CD4-positive, alpha-beta memory T cell (primary cell): ENCODE measurements at regions of chr1 and their contacts with region 1.

Region 1: GRCh38 chr1:111633736-111634247 is 14.2 kb downstream of the RAP1A start:
- DNase-seq: no peak
- H3K4me3 ChIP-seq: peak overlapping the region in 1 of 2 donors; percentile 1
- H3K4me3 Mint-ChIP-seq: peak overlapping the region in 6 of 8 donors; percentile 4 to 70 (median 36)
- H3K27ac ChIP-seq: no peak overlapping the region
- H3K27ac Mint-ChIP-seq: peak overlapping the region in 3 of 7 donors; percentile 11 to 74 (median 67)
- H3K4me1 ChIP-seq: peaks cover 92% of the 10 kb centered on the region
- H3K4me1 Mint-ChIP-seq: peaks cover 60 to 89% (median 79%) of the 10 kb centered on the region in 4 donors
- H3K27me3 ChIP-seq: no peaks in the 10 kb centered on the region
- H3K27me3 Mint-ChIP-seq: no peaks in the 10 kb centered on the region

Region 2: DNA sequence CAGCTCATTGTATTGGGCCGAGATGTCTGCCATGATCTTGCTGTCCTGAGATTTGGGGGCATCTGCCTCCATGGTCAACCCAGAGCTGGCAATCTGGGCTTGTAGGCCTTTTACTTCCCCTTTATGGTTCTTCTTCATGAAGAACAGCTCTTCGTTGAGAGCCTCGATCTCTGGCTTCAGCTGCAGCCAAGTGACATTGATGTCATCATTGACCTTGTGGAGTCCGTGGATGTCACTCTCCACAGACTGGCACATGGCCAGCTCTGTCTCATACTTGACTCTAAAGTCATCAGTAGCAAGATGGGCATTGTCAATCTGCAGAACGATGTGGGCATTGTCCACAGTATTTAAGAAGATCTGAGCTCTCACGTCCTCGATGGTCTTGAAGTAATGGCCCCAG is 15.0 kb after region 1 on chr1:
- CTCF ChIA-PET with region 1: interaction called, 4 read pairs
- POLR2A ChIA-PET with region 1: interaction called, 5 read pairs
- intact Hi-C with region 1: loop called (anchors 1 kb)
- DNase-seq: no peak
- H3K4me3 ChIP-seq: no peak overlapping the region
- H3K4me3 Mint-ChIP-seq: peak overlapping the region in 5 of 8 donors; percentile 36 to 73 (median 56)
- H3K27ac ChIP-seq: peak overlapping the region; percentile 0
- H3K27ac Mint-ChIP-seq: peak overlapping the region; percentile 28 to 84 (median 77)
- H3K4me1 ChIP-seq: peaks cover 85% of the 10 kb centered on the region
- H3K4me1 Mint-ChIP-seq: peaks cover 68 to 92% (median 81%) of the 10 kb centered on the region in 4 donors
- H3K27me3 ChIP-seq: no peaks in the 10 kb centered on the region
- H3K27me3 Mint-ChIP-seq: no peaks in the 10 kb centered on the region

Region 3: GRCh38 chr1:111755331-111756123 is 121.7 kb after region 1 on chr1 and contains the start of gene DDX20:
- CTCF ChIA-PET with region 1: no interaction called
- POLR2A ChIA-PET with region 1: no interaction called
- intact Hi-C with region 1: no loop called
- DNase-seq: peak; percentile 94 to 96 (median 95)
- H3K4me3 ChIP-seq: peak within 1 kb of the TSS; percentile 63 to 92
- H3K4me3 Mint-ChIP-seq: peak within 1 kb of the TSS; percentile 90 to 100 (median 98)
- H3K27ac ChIP-seq: peak within 1 kb of the TSS; percentile 93
- H3K27ac Mint-ChIP-seq: peak within 1 kb of the TSS; percentile 97 to 100 (median 99)
- H3K4me1 ChIP-seq: peaks cover 20% of the 10 kb centered on the region
- H3K4me1 Mint-ChIP-seq: peaks cover 26 to 36% (median 33%) of the 10 kb centered on the region in 4 donors
- H3K27me3 ChIP-seq: no peaks in the 10 kb centered on the region
- H3K27me3 Mint-ChIP-seq: peaks cover 0 to 2% of the 10 kb centered on the region in 2 donors
- total RNA-seq, gene DDX20: 22.2 to 26.0 TPM

Region 4: DNA sequence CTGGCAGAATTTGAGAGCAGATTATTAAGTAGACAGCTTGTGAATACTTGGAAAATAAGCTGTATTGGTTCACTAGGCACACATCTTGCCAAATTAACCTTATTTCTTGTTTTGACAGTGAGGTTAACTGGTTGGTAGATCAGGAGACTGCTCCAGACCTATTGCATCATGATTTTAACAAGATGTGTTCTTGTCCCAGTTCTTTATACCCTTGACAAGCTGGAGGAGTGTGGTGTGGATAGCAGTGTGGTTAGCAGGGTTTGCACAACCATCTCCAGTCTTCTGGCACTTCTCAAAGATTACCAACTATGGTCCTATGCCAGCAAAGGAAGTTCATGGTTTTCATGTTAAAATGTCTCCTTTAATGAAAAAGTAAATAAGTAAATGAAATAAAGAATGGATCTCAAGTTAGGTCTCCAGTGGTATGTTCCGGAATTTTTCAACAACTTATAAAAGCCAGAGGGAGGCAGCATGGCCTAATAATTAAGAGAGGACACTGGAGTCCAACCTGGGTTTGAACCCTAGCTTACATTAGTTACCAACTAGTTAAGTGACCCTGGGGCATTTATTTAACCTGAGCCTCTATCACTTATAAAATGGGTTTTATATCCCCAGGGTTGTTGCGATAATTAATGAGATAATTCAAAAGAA is 156.0 kb after region 1 on chr1:
- CTCF ChIA-PET with region 1: no interaction called
- POLR2A ChIA-PET with region 1: no interaction called
- intact Hi-C with region 1: no loop called
- DNase-seq: no peak
- H3K4me3 ChIP-seq: no peak overlapping the region
- H3K4me3 Mint-ChIP-seq: no peak overlapping the region
- H3K27ac ChIP-seq: no peak overlapping the region
- H3K27ac Mint-ChIP-seq: no peak overlapping the region
- H3K4me1 ChIP-seq: no peaks in the 10 kb centered on the region
- H3K4me1 Mint-ChIP-seq: no peaks in the 10 kb centered on the region
- H3K27me3 ChIP-seq: no peaks in the 10 kb centered on the region
- H3K27me3 Mint-ChIP-seq: peaks cover 5 to 10% of the 10 kb centered on the region in 2 donors

Region 5: GRCh38 chr1:112308716-112309115 is 674.9 kb after region 1 on chr1:
- CTCF ChIA-PET with region 1: no interaction called
- POLR2A ChIA-PET with region 1: no interaction called
- intact Hi-C with region 1: no loop called
- DNase-seq: no peak
- H3K4me3 ChIP-seq: no peak overlapping the region
- H3K4me3 Mint-ChIP-seq: no peak overlapping the region
- H3K27ac ChIP-seq: no peak overlapping the region
- H3K27ac Mint-ChIP-seq: no peak overlapping the region
- H3K4me1 ChIP-seq: no peaks in the 10 kb centered on the region
- H3K4me1 Mint-ChIP-seq: no peaks in the 10 kb centered on the region
- H3K27me3 ChIP-seq: no peaks in the 10 kb centered on the region
- H3K27me3 Mint-ChIP-seq: peaks cover 8 to 26% of the 10 kb centered on the region in 2 donors